CD4-positive, alpha-beta memory T cell (primary cell): ENCODE measurements at regions of chr2 and their contacts with region 1.

Region 1: DNA sequence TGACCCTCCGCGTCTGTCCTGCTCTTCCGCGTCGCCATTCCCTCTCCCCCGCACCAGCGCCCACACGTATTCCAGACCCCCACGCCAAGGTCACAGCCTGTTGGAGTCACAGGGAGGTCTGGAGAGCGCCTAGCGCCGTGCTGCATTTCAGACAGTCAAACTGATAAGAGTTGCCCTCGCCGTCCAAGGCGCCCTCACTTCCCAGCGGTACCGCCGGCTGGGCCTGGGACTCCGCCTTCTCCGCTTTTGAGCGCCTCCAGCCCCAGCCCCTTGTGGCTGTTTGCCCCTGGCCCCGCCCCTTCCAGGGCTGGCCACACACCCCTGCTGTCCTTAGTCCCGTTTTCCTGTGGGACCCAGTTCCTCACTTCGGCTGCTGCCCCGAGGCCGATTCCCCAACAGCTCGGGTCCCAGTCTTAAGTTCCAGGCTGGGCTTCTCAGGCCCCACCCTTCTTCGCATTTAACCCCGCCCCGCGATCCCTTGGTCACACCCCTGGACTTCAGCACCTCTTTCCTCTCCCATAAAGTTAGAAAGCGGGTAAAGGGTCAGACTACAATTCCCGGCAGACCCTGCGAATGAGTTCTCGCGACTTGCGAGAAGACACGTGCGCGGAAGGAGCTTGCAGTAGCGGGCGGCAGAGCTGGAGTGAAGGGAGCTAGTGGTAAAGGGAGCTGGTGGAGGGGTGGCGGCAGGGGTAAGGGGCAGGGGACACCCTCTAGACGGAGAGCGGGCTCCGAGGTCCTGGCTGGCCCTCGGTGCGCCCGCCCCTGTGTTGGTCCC is at the start of gene GMPPA:
- DNase-seq: peak; percentile 91 to 97 (median 92)
- H3K4me3 ChIP-seq: peak within 1 kb of the TSS; percentile 62 to 70
- H3K4me3 Mint-ChIP-seq: peak within 1 kb of the TSS; percentile 92 to 100 (median 99)
- H3K27ac ChIP-seq: peak within 1 kb of the TSS; percentile 53
- H3K27ac Mint-ChIP-seq: peak within 1 kb of the TSS; percentile 60 to 99 (median 94)
- H3K4me1 ChIP-seq: peaks cover 37% of the 10 kb centered on the region
- H3K4me1 Mint-ChIP-seq: peaks cover 22 to 39% (median 31%) of the 10 kb centered on the region in 4 donors
- H3K27me3 ChIP-seq: peaks cover 33% of the 10 kb centered on the region
- H3K27me3 Mint-ChIP-seq: peaks cover 31 to 34% of the 10 kb centered on the region in 2 donors
- total RNA-seq, gene GMPPA: 45.2 to 48.3 TPM

Region 2: DNA sequence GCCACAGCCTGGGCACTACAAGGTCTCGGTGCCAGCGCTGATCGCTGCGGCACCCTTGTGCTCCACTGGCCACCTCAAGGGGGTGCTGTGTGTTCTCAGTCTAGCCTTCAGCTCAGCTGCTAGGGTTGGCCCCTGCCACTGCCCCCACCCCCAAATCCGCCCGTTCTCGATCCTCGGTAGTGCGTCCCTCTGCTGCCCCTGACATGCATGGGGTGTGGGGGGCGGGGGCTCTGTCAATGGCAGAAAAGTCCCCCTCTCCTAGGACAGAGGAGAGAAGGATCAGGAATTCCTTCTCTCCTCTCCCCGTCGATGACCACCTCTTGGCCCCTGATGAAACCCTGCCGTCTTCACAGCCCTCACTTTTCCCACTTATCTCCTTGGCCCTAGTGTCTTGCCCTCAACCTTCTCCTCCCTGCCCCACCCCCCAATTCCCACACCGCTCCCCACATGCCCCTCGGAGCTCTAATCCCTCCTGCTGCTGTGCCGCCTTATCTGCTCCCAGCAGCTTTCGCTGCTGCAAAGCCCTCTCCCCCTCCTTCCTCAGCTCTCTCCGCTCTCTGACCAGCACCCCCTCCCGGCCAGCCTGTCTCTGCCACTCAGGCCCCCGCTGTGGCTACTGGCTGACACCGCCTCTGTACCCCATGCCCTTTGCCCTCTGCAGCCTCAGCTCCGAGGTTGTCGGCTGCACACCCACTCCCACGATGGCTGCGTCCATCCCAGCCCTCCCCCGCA is 11.5 kb after region 1 on chr2:
- CTCF ChIA-PET with region 1: interaction called, 14 read pairs
- POLR2A ChIA-PET with region 1: interaction called, 4 read pairs
- intact Hi-C with region 1: no loop called
- DNase-seq: peak; percentile 36 to 66 (median 40)
- H3K4me3 ChIP-seq: no peak overlapping the region
- H3K4me3 Mint-ChIP-seq: peak overlapping the region in 7 of 8 donors; percentile 28 to 75 (median 53)
- H3K27ac ChIP-seq: no peak overlapping the region
- H3K27ac Mint-ChIP-seq: peak overlapping the region in 1 of 7 donors; percentile 36
- H3K4me1 ChIP-seq: peaks cover 25% of the 10 kb centered on the region
- H3K4me1 Mint-ChIP-seq: peaks cover 6 to 33% (median 20%) of the 10 kb centered on the region in 4 donors
- H3K27me3 ChIP-seq: peaks cover 10% of the 10 kb centered on the region
- H3K27me3 Mint-ChIP-seq: peaks cover 36 to 40% of the 10 kb centered on the region in 2 donors

Region 3: GRCh38 chr2:219597552-219598307 is 99.3 kb after region 1 on chr2 and contains the start of gene STK11IP:
- CTCF ChIA-PET with region 1: interaction called, 6 read pairs
- POLR2A ChIA-PET with region 1: interaction called, 15 read pairs
- intact Hi-C with region 1: loop called (anchors 1 kb)
- DNase-seq: peak; percentile 87 to 93 (median 88)
- H3K4me3 ChIP-seq: peak within 1 kb of the TSS; percentile 62 to 100
- H3K4me3 Mint-ChIP-seq: peak within 1 kb of the TSS; percentile 90 to 97 (median 96)
- H3K27ac ChIP-seq: peak within 1 kb of the TSS; percentile 72
- H3K27ac Mint-ChIP-seq: peak within 1 kb of the TSS; percentile 90 to 99 (median 97)
- H3K4me1 ChIP-seq: peaks cover 14% of the 10 kb centered on the region
- H3K4me1 Mint-ChIP-seq: peaks cover 10 to 24% (median 17%) of the 10 kb centered on the region in 4 donors
- H3K27me3 ChIP-seq: no peaks in the 10 kb centered on the region
- H3K27me3 Mint-ChIP-seq: peaks cover 3 to 7% of the 10 kb centered on the region in 2 donors
- total RNA-seq, gene STK11IP: 48.7 to 50.2 TPM

Region 4: DNA sequence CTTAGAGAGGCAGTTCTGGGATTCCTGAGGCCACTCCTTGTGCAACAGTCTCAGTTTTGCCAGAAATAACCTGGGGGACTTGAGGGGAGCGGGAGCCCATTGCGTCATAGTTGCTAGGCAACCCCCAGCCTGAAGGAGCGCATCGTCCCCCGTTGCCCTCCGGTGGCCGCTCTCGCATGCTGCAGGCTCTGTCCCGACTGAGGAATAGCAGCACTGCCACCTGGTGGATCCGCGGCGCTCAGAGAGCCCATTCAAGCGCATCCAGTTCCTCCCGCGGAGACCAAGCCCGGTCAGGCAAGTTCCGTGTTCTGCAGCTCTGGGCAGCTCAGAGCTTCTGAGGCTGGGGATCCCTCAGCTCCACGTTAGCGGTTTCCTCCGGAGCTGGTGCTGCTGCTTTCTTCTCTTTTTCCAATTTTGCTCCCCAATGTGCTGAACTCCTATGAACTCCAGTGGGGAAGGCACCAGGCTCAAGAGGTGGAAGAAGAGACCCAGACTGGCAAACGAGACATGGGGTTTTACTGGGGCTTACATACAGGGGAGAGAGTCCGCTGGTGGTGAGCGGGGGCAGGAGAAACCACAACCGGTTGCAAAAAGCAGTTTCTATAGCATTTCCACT is 144.1 kb after region 1 on chr2:
- CTCF ChIA-PET with region 1: no interaction called
- POLR2A ChIA-PET with region 1: no interaction called
- intact Hi-C with region 1: loop called (anchors 5 kb)
- DNase-seq: peak; percentile 80 to 88 (median 83)
- H3K4me3 ChIP-seq: no peak overlapping the region
- H3K4me3 Mint-ChIP-seq: no peak overlapping the region
- H3K27ac ChIP-seq: no peak overlapping the region
- H3K27ac Mint-ChIP-seq: peak overlapping the region in 4 of 7 donors; percentile 32 to 70 (median 53)
- H3K4me1 ChIP-seq: no peaks in the 10 kb centered on the region
- H3K4me1 Mint-ChIP-seq: peaks cover 0 to 6% (median 4%) of the 10 kb centered on the region in 4 donors
- H3K27me3 ChIP-seq: no peaks in the 10 kb centered on the region
- H3K27me3 Mint-ChIP-seq: peaks cover 12 to 36% of the 10 kb centered on the region in 2 donors

Region 5: GRCh38 chr2:219929835-219930234 is 431.4 kb after region 1 on chr2:
- CTCF ChIA-PET with region 1: no interaction called
- POLR2A ChIA-PET with region 1: no interaction called
- intact Hi-C with region 1: no loop called
- DNase-seq: no peak
- H3K4me3 ChIP-seq: no peak overlapping the region
- H3K4me3 Mint-ChIP-seq: no peak overlapping the region
- H3K27ac ChIP-seq: no peak overlapping the region
- H3K27ac Mint-ChIP-seq: no peak overlapping the region
- H3K4me1 ChIP-seq: no peaks in the 10 kb centered on the region
- H3K4me1 Mint-ChIP-seq: no peaks in the 10 kb centered on the region
- H3K27me3 ChIP-seq: no peaks in the 10 kb centered on the region
- H3K27me3 Mint-ChIP-seq: peaks cover 2 to 3% of the 10 kb centered on the region in 2 donors